GM18951 (cell line): ENCODE measurements at regions of chr17 and their contacts with region 1.

Region 1: GRCh38 chr17:77319211-77320043 is 178.7 kb downstream of the SEC14L1 start:
- POLR2A ChIP-seq: peak; percentile 57

Region 2: DNA sequence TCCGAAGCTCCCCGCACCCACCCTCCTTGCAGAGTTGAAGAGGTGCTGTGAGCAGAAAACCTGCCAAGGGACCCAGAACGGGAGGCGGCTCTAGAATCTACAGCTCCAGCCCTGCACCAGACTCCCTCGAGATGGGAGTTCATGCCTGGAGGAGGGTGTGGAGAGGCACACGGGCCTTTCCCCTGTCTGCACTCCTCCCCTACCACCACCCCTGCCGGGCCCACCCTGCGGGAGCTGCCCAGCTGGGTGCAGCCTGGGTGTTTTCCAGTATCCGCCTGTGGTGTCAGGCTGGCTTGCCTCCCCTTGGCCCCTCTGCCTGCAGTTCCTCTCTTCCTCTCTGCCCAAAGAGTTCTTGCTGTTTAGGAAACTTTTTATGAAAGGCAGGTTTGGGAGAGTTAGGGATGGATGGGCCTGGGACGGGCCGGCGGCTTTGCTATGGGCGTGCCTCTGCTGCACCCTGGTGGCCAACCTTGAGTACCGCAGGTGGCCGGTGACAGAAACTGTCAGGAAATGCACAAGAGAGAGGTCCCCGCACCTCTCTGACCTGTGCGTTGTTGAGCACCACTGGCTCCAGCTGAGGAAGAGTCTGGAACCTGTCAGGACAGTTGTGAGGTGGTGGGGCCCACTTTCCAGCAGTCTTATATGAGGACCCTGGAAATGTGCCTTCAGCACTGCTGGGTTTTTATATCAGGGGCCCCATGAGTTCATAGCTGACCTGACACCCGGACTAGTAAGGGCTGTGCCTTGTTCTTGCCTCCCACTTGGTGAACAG is 175.4 kb after region 1 on chr17:
- in situ Hi-C with region 1: loop called (anchors 10 kb)
- POLR2A ChIP-seq: peak; percentile 36